Ovary (tissue), 10 donors: ENCODE measurements at regions of chr9 and their contacts with region 1.

Region 1: GRCh38 chr9:72364679-72365524 is at the start of gene ZFAND5:
- DNase-seq: peak; percentile 98 to 99 (median 99)
- H3K4me3 ChIP-seq: peak within 1 kb of the TSS; percentile 94
- H3K27ac ChIP-seq: peak within 1 kb of the TSS; percentile 99 to 100
- H3K4me1 ChIP-seq: no peaks in the 10 kb centered on the region
- H3K27me3 ChIP-seq: no peaks in the 10 kb centered on the region
- CTCF ChIP-seq: peak in 2 of 3 donors; percentile 23 to 37
- EP300 ChIP-seq: peak; percentile 58
- POLR2A ChIP-seq: peak; percentile 99
- total RNA-seq, gene ZFAND5: 198 to 904 (median 321) TPM

Region 2: DNA sequence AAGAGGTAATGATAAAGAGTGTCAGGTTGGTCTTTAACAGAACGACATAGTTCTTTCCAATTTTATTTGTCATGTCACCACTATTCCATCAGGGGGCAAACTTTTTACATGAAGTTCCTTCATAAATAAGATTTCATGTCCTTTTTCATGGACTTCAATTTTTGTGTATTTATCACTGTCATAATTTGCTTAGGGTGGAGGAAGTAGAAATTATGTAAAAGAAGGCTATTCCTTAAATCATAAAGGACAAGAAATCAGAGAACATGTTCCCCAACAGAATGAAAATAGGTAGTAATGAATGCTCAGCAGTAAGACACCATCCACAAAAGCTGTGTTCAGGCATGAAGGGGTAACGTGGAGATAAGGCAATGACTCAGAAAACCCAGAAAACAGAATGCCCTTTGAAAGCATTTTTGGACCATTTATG is 72.6 kb before region 1 on chr9:
- intact Hi-C with region 1: loop called in 1 of 4 experiments (anchors 10 kb)
- DNase-seq: no peak
- H3K4me3 ChIP-seq: no peak overlapping the region
- H3K27ac ChIP-seq: no peak overlapping the region
- H3K4me1 ChIP-seq: peaks cover 2% of the 10 kb centered on the region
- H3K27me3 ChIP-seq: no peaks in the 10 kb centered on the region
- CTCF ChIP-seq: peak; percentile 13 to 49 (median 36)
- EP300 ChIP-seq: no peak
- POLR2A ChIP-seq: no peak

Region 3: DNA sequence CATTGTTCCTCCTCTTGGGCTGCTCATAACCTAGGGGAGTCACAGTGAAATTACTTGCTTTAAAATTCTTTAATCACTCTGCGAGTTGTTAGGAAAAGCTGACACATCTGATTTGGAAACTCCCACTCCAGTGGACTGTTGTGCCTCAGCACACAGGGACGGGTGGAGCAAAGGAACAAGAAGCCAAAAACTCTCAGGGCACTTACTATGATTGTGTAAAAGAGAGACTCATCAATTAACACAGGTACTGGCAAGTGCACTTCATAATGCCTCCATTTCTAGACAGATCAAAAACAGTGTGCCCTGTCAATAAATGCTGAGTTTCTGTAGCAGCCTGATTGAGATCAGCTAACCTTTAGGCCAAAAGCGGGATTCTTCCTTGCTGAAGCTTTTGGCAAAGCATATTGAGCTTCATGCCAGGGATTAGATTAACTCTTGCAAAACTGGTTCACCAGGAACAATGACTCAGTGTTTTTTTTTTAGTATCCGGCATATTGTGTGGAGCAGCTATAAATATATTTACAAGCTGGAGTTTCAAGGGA is 212.4 kb after region 1 on chr9:
- intact Hi-C with region 1: loop called in 1 of 4 experiments (anchors 5 kb)
- DNase-seq: peak in 1 of 5 donors; percentile 50
- H3K4me3 ChIP-seq: no peak overlapping the region
- H3K27ac ChIP-seq: peak overlapping the region in 1 of 2 donors; percentile 50
- H3K4me1 ChIP-seq: peaks cover 6% of the 10 kb centered on the region
- H3K27me3 ChIP-seq: no peaks in the 10 kb centered on the region
- CTCF ChIP-seq: no peak
- EP300 ChIP-seq: no peak
- POLR2A ChIP-seq: no peak

Region 4: DNA sequence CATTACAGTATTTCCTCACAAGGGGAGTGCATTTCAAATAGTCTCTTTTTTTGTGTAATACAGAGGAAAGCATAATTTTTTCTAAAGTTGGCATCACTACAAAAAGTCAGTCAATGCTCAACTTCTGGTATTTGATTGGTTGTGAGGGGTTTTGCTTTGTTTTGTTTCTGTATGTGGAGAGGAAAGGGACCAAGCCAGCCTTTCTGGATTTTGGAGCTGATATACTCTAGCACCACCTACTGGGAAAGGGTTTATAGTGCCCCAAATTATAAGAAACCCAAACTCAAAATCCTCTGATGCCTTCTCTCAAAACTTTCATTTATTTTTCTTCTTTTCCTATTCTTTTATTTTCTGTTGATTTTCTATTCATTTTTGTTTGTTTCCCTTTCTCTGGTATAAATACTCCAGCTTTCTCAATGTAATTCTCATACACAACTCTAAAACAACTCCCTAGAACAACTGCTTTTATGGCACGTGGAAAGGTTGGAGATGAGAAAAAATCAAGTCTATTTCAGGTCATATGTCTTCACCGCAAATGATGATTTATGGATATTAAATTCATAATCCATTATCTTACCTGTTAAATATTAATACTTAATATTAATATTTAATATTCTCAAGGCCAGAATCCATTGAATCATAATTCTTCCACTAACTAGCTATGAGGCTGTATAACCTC is 717.2 kb after region 1 on chr9:
- intact Hi-C with region 1: no loop called
- DNase-seq: peak in 1 of 5 donors; percentile 36
- H3K4me3 ChIP-seq: no peak overlapping the region
- H3K27ac ChIP-seq: no peak overlapping the region
- H3K4me1 ChIP-seq: peaks cover 4% of the 10 kb centered on the region
- H3K27me3 ChIP-seq: no peaks in the 10 kb centered on the region
- CTCF ChIP-seq: peak; percentile 49 to 85 (median 73)
- EP300 ChIP-seq: no peak
- POLR2A ChIP-seq: no peak